Esophagus muscularis mucosa (tissue), 4 donors: ENCODE measurements at regions of chr3 and their contacts with region 1.

Region 1: DNA sequence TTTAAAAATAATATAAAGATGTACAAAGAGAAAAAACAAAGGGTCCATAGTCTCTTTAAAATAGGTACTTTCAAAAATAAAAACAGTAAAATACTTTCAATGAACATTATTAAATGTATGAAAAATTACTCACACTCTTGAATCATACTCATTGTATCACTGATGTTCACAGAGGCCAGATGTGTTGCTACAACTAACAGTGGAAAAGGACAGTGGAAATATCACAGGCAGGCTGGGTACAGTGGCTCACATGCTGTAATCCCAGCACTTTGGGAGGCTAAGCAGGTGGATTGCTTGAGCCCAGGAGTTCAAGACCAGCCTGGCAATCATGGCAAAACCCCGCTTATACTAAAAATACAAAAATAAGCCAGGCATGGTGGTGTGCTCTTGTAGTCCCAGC is 26.8 kb downstream of the NPHP3 start:
- DNase-seq: no peak
- H3K4me3 ChIP-seq: no peak overlapping the region
- H3K27ac ChIP-seq: no peak overlapping the region
- H3K4me1 ChIP-seq: no peaks in the 10 kb centered on the region
- H3K27me3 ChIP-seq: no peaks in the 10 kb centered on the region
- CTCF ChIP-seq: no peak
- EP300 ChIP-seq: no peak
- POLR2A ChIP-seq: no peak

Region 2: GRCh38 chr3:132499071-132499470 is 196.4 kb before region 1 on chr3:
- intact Hi-C with region 1: loop called (anchors 10 kb)
- DNase-seq: no peak
- H3K4me3 ChIP-seq: no peak overlapping the region
- H3K27ac ChIP-seq: no peak overlapping the region
- H3K4me1 ChIP-seq: no peaks in the 10 kb centered on the region
- H3K27me3 ChIP-seq: no peaks in the 10 kb centered on the region
- CTCF ChIP-seq: no peak
- EP300 ChIP-seq: no peak
- POLR2A ChIP-seq: no peak

Region 3: DNA sequence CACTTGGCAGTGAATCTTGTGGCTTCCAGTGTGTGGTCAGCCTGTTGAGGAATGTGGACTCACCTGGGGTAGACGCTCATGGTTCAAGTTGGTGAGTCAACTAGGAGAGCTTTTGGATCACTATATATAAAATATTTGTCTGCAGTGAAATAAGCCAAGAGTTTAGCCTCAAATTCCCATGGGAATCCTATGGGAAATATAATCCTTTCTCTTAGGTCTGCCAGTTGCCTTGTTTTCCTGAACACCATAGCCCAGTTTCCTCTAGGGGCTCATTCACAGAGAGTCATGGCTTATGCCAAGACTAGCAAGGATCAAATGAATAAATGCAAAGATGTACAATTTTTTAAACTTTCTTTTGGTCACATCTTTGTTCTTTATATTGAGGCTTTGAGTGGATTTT is 126.8 kb after region 1 on chr3:
- intact Hi-C with region 1: no loop called
- DNase-seq: no peak
- H3K4me3 ChIP-seq: no peak overlapping the region
- H3K27ac ChIP-seq: no peak overlapping the region
- H3K4me1 ChIP-seq: no peaks in the 10 kb centered on the region
- H3K27me3 ChIP-seq: no peaks in the 10 kb centered on the region
- CTCF ChIP-seq: no peak
- EP300 ChIP-seq: no peak
- POLR2A ChIP-seq: no peak